HEK293 (cell line): ENCODE measurements at regions of chr11 and their contacts with region 1.

Region 1: GRCh38 chr11:8247312-8247711 is 16.4 kb downstream of the LMO1 start:
- H3K4me3 ChIP-seq: no peak overlapping the region
- H3K27ac ChIP-seq: no peak overlapping the region
- H3K4me1 ChIP-seq: no peaks in the 10 kb centered on the region
- CTCF ChIP-seq: no peak

Region 2: GRCh38 chr11:8233691-8234424 is 13.5 kb before region 1 on chr11:
- CTCF ChIA-PET with region 1: interaction called, 12 read pairs
- POLR2A ChIA-PET with region 1: no interaction called
- H3K4me3 ChIP-seq: no peak overlapping the region
- H3K27ac ChIP-seq: no peak overlapping the region
- H3K4me1 ChIP-seq: peaks cover 2% of the 10 kb centered on the region; the same call in 1 of the 2 replicates
- CTCF ChIP-seq: no peak

Region 3: GRCh38 chr11:8258784-8259183 is 11.5 kb after region 1 on chr11:
- CTCF ChIA-PET with region 1: interaction called, 40 read pairs
- POLR2A ChIA-PET with region 1: interaction called, 3 read pairs
- H3K4me3 ChIP-seq: no peak overlapping the region
- H3K27ac ChIP-seq: no peak overlapping the region
- H3K4me1 ChIP-seq: no peaks in the 10 kb centered on the region
- CTCF ChIP-seq: no peak